Dorsolateral prefrontal cortex (tissue), 120 donors: ENCODE measurements at regions of chr4 and their contacts with region 1.

Region 1: DNA sequence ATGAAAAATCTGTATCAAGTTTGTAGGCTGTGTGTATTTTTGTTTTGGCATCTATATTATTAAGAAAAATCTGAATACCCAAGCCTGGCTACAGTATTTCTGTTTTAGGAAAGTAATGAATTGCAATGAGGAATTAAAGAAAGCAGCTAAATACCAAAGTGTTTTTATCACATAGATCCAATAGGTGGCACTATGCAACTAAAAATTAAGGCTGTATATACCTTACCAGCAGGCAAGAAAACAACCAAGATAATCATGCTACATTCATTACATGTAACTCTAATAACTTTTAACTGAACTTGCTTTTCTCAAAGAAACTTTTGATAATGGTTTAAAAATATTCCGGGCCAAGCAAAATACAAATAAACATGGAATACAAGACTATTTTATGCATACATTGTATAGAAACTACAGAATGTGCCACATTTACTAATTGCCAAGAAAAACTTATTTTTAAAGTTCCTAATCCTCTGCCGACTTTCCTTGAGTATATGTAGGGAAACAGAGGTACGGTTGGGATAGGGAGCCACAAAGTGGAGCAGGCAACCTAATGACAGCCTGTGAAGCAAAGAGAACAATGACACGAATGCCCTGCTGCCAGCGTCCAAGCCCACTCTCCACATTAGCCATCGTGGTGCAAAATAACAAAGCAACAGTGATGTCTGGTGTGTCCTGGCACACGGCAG is 63.7 kb downstream of the SEC24D start:
- DNase-seq: no peak
- H3K4me3 ChIP-seq: no peak overlapping the region
- H3K27ac ChIP-seq: peak overlapping the region in 1 of 59 donors; percentile 3
- H3K27me3 ChIP-seq: no peaks in the 10 kb centered on the region
- CTCF ChIP-seq: peak; percentile 37 to 90 (median 76)

Region 2: DNA sequence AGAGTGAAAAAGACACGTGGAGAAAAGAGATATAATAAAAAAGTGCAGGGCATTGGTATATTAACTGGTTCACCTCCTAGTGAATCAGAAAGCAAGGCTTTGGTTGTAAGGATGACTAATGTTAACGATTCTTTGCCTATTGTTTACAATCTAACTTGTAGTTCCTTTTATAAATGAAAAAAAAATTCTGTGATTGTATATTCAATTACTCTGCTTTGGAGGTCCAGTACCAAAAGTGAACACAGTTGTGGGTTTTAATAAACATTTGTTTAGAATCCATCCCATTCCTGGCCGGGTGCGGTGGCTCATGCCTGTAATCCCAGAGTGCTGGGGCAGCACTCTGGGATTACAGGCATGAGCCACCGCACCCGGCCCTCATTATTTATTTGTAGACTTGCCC is 382.5 kb before region 1 on chr4:
- intact Hi-C with region 1: no loop called
- DNase-seq: no peak
- H3K4me3 ChIP-seq: no peak overlapping the region
- H3K27ac ChIP-seq: no peak overlapping the region
- H3K27me3 ChIP-seq: peaks cover 0 to 7% (median 0%) of the 10 kb centered on the region in 45 donors
- CTCF ChIP-seq: no peak

Region 3: DNA sequence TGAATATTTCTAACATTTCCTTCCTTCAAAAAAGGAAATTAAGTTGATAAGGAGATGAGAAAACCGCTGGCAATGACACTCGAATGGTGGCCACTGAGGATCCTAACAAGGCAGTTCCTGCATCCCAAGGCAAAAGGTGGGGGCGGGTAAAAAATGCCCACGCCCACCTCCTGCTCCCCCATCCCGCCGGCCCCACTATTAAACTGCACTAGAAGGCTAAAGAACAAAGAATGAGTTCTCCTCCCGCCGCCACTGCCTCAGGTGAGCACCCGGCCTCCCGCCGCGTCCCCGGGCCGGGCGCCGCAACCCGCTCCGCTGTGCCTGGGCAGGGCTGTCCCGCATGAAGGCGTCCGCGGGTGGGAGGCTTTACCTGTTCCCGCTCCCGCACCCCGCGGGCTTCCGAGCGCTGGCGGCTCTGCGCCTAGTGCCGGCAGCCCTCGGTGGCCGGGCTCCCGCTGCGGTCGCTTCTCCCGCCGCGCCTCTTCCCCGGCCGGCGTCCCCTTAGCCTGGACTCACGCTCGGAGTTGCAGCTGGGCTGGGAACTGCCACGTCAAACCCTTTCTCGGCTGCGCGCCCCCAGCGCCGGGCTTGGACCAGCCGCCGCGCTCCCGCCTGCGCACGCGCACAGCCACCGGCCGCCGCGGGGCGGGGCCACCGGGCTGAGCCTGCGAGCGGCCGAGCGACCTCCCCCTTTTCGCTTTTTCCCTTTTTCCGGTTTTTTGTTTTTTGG is 63.5 kb after region 1 on chr4 and contains the start of gene SEC24D:
- intact Hi-C with region 1: no loop called
- DNase-seq: peak; percentile 65 to 93 (median 80)
- H3K4me3 ChIP-seq: peak within 1 kb of the TSS; percentile 69 to 99 (median 92)
- H3K27ac ChIP-seq: peak within 1 kb of the TSS; percentile 28 to 97 (median 81)
- H3K27me3 ChIP-seq: no peaks in the 10 kb centered on the region
- CTCF ChIP-seq: peak in 29 of 56 donors; percentile 6 to 60 (median 28)
- total RNA-seq, gene SEC24D: 12.7 to 44.7 (median 24.8) TPM

Region 4: GRCh38 chr4:118888666-118889311 is 116.6 kb after region 1 on chr4 and contains the start of gene SYNPO2:
- intact Hi-C with region 1: loop called (anchors 5 to 10 kb)
- DNase-seq: peak; percentile 35 to 78 (median 71)
- H3K4me3 ChIP-seq: peak within 1 kb of the TSS; percentile 36 to 77 (median 60)
- H3K27ac ChIP-seq: peak within 1 kb of the TSS in 53 of 59 donors; percentile 8 to 88 (median 66)
- H3K27me3 ChIP-seq: no peaks in the 10 kb centered on the region
- CTCF ChIP-seq: peak in 4 of 56 donors; percentile 11 to 25 (median 14)
- total RNA-seq, gene SYNPO2: 19.6 to 90.2 (median 34.3) TPM

Region 5: GRCh38 chr4:118898684-118899138 is 126.5 kb after region 1 on chr4:
- intact Hi-C with region 1: loop called in 1 of 2 experiments (anchors 10 kb)
- DNase-seq: no peak
- H3K4me3 ChIP-seq: no peak overlapping the region
- H3K27ac ChIP-seq: peak overlapping the region in 7 of 59 donors; percentile 10 to 53 (median 18)
- H3K27me3 ChIP-seq: no peaks in the 10 kb centered on the region
- CTCF ChIP-seq: no peak

Region 6: GRCh38 chr4:118968005-118968404 is 195.8 kb after region 1 on chr4:
- intact Hi-C with region 1: loop called in 1 of 2 experiments (anchors 5 kb)
- DNase-seq: peak in 1 of 10 donors; percentile 30
- H3K4me3 ChIP-seq: peak overlapping the region in 1 of 59 donors; percentile 16
- H3K27ac ChIP-seq: peak overlapping the region in 26 of 59 donors; percentile 4 to 62 (median 31)
- H3K27me3 ChIP-seq: no peaks in the 10 kb centered on the region
- CTCF ChIP-seq: no peak